ENCODE measurements at regions of chr11 and their contacts with region 1.

Region 1: DNA sequence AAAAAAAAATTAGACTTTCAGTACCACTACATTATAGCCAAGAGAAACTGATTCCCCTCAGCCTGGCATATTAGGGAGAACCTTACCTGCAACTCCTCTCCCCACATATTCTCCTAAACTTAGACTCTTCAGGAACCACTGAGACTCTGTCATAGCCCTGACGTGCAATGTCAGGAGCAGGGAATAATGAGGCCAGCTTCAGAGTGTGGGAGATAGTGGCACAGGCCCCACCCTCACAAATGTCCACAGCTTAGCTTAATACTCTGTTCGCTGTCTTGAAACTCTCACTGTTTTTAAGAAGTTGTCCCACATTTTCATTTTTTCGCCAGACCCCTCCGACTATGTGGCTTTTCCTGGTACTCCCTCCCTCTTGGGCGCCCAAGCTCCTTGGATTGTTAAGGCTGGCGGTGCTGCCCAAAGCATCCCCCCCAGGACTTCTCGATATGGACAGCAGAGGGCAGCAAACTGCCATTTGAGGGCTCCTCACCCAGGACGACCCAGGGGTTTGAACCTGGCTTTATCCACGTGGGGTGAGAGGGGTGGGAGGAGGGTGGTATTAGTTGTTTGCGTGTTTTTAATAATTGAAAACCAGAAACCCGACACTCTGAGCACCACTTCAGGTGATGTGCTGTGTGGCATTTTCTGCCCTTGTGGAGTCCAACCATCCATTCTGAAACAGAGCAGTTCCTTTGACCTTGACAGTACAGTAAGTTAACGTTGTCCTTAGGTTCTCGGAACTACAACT is 45.2 kb upstream of the RASSF10 start:
- DNase-seq: peak; percentile 42 to 72
- ATAC-seq: peak; percentile 69 to 86 (median 80)
- H3K4me3 ChIP-seq: no peak overlapping the region
- H3K4me3 Mint-ChIP-seq: no peak overlapping the region
- H3K27ac ChIP-seq: no peak overlapping the region
- H3K27ac Mint-ChIP-seq: no peak overlapping the region
- H3K4me1 ChIP-seq: no peaks in the 10 kb centered on the region
- H3K4me1 Mint-ChIP-seq: no peaks in the 10 kb centered on the region
- H3K27me3 ChIP-seq: no peaks in the 10 kb centered on the region
- H3K27me3 Mint-ChIP-seq: peaks cover 6 to 23% of the 10 kb centered on the region in 2 donors
- CTCF ChIP-seq: peak; percentile 71

Region 2: GRCh38 chr11:12787847-12788246 is 176.1 kb before region 1 on chr11:
- intact Hi-C with region 1: no loop called
- DNase-seq: no peak
- ATAC-seq: no peak
- H3K4me3 ChIP-seq: no peak overlapping the region
- H3K4me3 Mint-ChIP-seq: no peak overlapping the region
- H3K27ac ChIP-seq: no peak overlapping the region
- H3K27ac Mint-ChIP-seq: no peak overlapping the region
- H3K4me1 ChIP-seq: no peaks in the 10 kb centered on the region
- H3K4me1 Mint-ChIP-seq: no peaks in the 10 kb centered on the region
- H3K27me3 ChIP-seq: no peaks in the 10 kb centered on the region
- H3K27me3 Mint-ChIP-seq: peaks cover 13 to 18% of the 10 kb centered on the region in 2 donors
- CTCF ChIP-seq: no peak

Region 3: GRCh38 chr11:13238879-13239514 is 275.0 kb after region 1 on chr11:
- intact Hi-C with region 1: loop called (anchors 5 kb)
- DNase-seq: peak in 1 of 2 donors; percentile 77
- ATAC-seq: peak; percentile 76 to 86 (median 82)
- H3K4me3 ChIP-seq: no peak overlapping the region
- H3K4me3 Mint-ChIP-seq: no peak overlapping the region
- H3K27ac ChIP-seq: no peak overlapping the region
- H3K27ac Mint-ChIP-seq: no peak overlapping the region
- H3K4me1 ChIP-seq: no peaks in the 10 kb centered on the region
- H3K4me1 Mint-ChIP-seq: peaks cover 5 to 6% of the 10 kb centered on the region in 2 donors
- H3K27me3 ChIP-seq: no peaks in the 10 kb centered on the region
- H3K27me3 Mint-ChIP-seq: peaks cover 18 to 35% of the 10 kb centered on the region in 2 donors
- CTCF ChIP-seq: peak; percentile 94

Measured in natural killer cell (primary cell).